OCI-LY7 (cell line): ENCODE measurements at regions of chr11 and their contacts with region 1.

Region 1: DNA sequence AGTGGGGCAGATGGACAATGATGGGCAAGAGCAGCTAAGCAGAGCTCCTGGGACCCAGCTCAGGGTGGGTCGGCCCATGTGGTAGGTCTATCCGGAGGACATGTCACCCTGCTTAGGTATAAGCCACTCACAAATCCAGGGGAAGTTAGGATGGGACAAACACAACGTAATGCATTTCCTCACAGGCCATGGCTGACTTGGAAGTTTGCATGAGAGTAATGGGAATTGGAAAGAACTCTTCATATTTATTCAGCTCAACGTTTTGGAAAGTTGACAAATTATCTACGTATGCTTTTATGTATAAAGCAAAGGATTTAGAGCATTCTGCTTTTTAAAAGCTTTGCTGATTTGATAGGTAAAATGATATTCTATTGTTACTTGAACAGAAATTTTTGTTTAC is 74.9 kb downstream of the SMCO4 start:
- DNase-seq: no peak
- H3K4me3 ChIP-seq: no peak overlapping the region
- H3K27ac ChIP-seq: no peak overlapping the region
- H3K4me1 ChIP-seq: peaks cover 16% of the 10 kb centered on the region
- CTCF ChIP-seq: no peak

Region 2: DNA sequence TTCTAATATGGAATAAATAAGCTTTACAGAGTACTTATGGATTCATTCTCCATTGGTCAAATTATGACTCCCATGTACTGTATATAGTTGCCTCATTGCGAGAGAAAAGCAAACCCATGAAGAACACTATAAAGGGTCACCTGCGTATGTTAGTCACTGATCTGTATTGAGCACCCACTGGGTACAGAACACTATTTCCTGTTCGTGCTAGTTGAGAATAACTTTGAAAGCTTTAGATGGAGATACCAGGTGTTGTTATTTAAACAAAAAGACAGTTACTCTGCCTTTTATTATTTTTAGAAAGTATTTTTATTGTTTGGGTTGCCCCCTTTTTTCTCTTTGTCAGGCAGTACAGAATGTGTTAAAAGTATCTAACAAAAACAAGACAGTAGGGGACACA is 57.8 kb before region 1 on chr11:
- CTCF ChIA-PET with region 1: no interaction called
- POLR2A ChIA-PET with region 1: interaction called, 3 read pairs
- intact Hi-C with region 1: loop called (anchors 5 kb)
- DNase-seq: peak; percentile 70
- H3K4me3 ChIP-seq: peak overlapping the region; percentile 27
- H3K27ac ChIP-seq: peak overlapping the region; percentile 92
- H3K4me1 ChIP-seq: peaks cover 40% of the 10 kb centered on the region
- CTCF ChIP-seq: no peak